ENCODE measurements at regions of chr17 and their contacts with region 1.

Region 1: DNA sequence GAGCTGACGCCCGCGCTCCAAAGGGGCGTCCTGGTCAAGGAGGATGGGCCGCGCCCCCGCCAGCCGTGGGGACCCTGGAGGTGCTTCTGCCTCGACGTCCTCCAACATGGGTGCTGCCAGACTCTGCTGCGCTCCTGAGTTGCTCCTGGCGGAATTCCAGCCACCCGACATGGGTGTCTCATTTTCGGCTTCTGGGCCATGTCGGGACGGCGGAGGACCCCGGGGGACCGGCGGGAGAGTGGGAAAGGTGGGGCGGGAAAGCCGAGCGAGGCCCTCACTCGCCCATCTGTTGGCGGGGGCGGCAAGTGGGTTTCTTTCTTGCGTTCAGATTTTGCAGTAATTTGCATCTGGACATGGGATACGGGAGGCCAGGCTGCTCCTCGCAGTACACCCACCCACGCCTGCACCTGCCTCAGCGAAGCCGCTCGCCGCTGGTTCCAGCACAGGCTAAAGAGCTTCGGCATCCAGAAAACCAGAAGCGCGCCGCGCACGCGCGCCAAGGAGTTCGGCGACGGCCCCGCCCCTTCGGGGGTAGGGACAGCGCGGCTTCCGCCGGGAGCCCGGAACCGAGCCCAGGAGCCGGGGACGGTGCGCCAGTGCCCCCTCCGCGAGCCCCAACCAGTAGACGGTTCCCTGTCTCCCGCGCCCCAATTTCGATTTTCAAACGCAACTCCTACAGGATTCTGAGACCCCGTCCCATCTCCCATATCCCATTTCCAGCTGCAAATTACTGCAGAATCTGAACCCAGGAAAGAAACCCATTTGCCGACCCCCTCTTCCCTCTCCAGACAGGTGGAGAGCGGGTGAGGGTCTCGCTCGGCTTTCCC is at the start of gene ARMC7:
- DNase-seq: peak; percentile 77 to 95 (median 91)
- ATAC-seq: peak; percentile 83
- H3K4me3 ChIP-seq: peak within 1 kb of the TSS; percentile 90 to 91
- H3K4me3 Mint-ChIP-seq: peak within 1 kb of the TSS; percentile 87
- H3K27ac ChIP-seq: peak within 1 kb of the TSS; percentile 42 to 75
- H3K27ac Mint-ChIP-seq: peak within 1 kb of the TSS; percentile 92
- H3K4me1 ChIP-seq: peaks cover 34% of the 10 kb centered on the region
- H3K4me1 Mint-ChIP-seq: peaks cover 33% of the 10 kb centered on the region
- H3K27me3 ChIP-seq: no peaks in the 10 kb centered on the region
- H3K27me3 Mint-ChIP-seq: no peaks in the 10 kb centered on the region
- CTCF ChIP-seq: no peak
- total RNA-seq, gene ARMC7: 2.0 to 3.0 TPM

Region 2: DNA sequence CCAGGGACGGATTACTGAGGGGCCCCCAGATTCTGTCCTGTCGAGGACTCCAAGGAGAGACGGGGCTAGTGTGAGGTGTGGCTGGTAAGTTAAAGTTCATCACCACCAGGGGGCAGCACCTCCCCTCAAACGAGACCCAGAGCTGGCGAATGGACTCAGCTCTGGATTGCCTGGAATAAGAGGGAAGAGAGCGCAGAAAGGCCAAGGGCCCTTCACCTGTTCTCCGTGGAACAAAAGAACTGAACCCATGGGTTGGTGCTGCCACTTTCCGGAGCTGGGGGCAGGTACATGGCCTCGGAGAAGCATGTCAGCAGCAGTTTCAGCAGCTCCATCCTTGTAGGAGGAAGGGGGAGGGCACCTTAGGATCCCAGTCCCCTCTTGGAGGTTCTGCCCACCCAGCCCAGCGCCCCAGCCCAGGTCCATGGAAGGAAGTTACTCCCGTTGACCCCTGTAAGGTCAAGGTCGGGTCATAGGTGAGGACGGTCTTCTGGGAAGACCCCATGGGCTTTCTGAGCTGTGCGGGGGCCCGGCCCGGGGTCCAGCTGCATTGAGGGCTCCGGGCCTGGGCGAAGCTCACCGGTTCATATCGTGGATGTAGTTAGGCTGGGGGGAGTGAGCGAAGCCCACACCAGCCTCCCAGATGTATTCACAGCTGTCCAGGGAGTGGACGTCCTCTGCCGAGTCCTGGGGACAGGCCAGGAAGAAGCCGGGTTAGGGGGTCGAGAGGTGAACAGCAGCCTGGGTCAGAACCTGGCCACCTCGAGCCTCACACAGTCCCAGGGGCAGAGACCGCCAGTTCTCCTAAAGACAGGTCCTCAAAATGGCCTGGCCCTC is 147.7 kb before region 1 on chr17:
- CTCF ChIA-PET with region 1: interaction called, 36 read pairs
- POLR2A ChIA-PET with region 1: interaction called, 8 read pairs
- intact Hi-C with region 1: loop called (anchors 1 to 5 kb)
- DNase-seq: peak; percentile 62 to 93 (median 85)
- ATAC-seq: peak; percentile 75
- H3K4me3 ChIP-seq: no peak overlapping the region
- H3K4me3 Mint-ChIP-seq: no peak overlapping the region
- H3K27ac ChIP-seq: no peak overlapping the region
- H3K27ac Mint-ChIP-seq: no peak overlapping the region
- H3K4me1 ChIP-seq: no peaks in the 10 kb centered on the region
- H3K4me1 Mint-ChIP-seq: peaks cover 9% of the 10 kb centered on the region
- H3K27me3 ChIP-seq: no peaks in the 10 kb centered on the region
- H3K27me3 Mint-ChIP-seq: no peaks in the 10 kb centered on the region
- CTCF ChIP-seq: peak; percentile 86

Region 3: GRCh38 chr17:75069783-75070182 is 39.8 kb before region 1 on chr17:
- CTCF ChIA-PET with region 1: interaction called, 16 read pairs
- POLR2A ChIA-PET with region 1: no interaction called
- intact Hi-C with region 1: no loop called
- DNase-seq: peak in 1 of 9 experiments; percentile 34
- ATAC-seq: no peak
- H3K4me3 ChIP-seq: no peak overlapping the region
- H3K4me3 Mint-ChIP-seq: no peak overlapping the region
- H3K27ac ChIP-seq: no peak overlapping the region
- H3K27ac Mint-ChIP-seq: no peak overlapping the region
- H3K4me1 ChIP-seq: peaks cover 9% of the 10 kb centered on the region
- H3K4me1 Mint-ChIP-seq: peaks cover 16% of the 10 kb centered on the region
- H3K27me3 ChIP-seq: no peaks in the 10 kb centered on the region
- H3K27me3 Mint-ChIP-seq: no peaks in the 10 kb centered on the region
- CTCF ChIP-seq: no peak

Region 4: DNA sequence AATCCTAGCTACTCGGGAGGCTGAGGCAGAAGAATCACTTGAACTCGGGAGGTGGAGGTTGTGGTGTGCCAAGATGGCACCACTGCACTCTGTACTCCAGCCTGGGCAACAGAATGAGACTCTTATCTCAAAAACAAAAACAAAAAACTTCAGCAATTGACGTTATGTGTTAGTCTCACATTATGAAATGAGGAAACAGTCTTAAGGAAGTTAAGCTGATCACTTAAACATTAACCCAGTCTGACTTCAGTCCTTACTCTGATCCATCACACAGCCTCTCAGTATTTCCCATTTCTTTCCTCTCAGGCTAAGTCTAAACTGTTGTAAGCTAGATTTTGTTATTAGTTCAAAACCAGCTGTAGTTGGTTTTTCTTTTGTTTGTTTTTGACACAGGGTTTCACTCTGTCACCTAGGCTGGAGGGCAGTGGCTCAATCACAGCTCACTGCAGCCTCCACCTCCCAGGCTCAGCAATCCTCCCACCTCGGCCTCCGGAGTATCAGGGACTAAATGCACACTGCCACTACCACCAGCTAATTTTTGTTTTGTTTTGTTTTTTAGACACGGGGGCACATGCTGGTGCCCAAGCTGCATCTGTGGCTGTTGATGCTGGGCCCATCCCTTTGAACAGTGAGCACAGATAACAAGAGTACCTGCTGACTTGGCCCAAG is 38.4 kb after region 1 on chr17:
- CTCF ChIA-PET with region 1: interaction called, 16 read pairs
- POLR2A ChIA-PET with region 1: no interaction called
- intact Hi-C with region 1: no loop called
- DNase-seq: no peak
- ATAC-seq: no peak
- H3K4me3 ChIP-seq: no peak overlapping the region
- H3K4me3 Mint-ChIP-seq: no peak overlapping the region
- H3K27ac ChIP-seq: no peak overlapping the region
- H3K27ac Mint-ChIP-seq: peak overlapping the region; percentile 25
- H3K4me1 ChIP-seq: peaks cover 13% of the 10 kb centered on the region
- H3K4me1 Mint-ChIP-seq: peaks cover 15% of the 10 kb centered on the region
- H3K27me3 ChIP-seq: no peaks in the 10 kb centered on the region
- H3K27me3 Mint-ChIP-seq: no peaks in the 10 kb centered on the region
- CTCF ChIP-seq: no peak

Region 5: GRCh38 chr17:75205037-75205792 is 95.6 kb after region 1 on chr17 and contains the start of gene NUP85:
- CTCF ChIA-PET with region 1: interaction called, 177 read pairs
- POLR2A ChIA-PET with region 1: interaction called, 20 read pairs
- intact Hi-C with region 1: loop called (anchors 1 kb)
- DNase-seq: peak; percentile 84 to 96 (median 92)
- ATAC-seq: peak; percentile 93
- H3K4me3 ChIP-seq: peak within 1 kb of the TSS; percentile 85 to 93
- H3K4me3 Mint-ChIP-seq: peak within 1 kb of the TSS; percentile 94
- H3K27ac ChIP-seq: peak within 1 kb of the TSS; percentile 70 to 89
- H3K27ac Mint-ChIP-seq: peak within 1 kb of the TSS; percentile 99
- H3K4me1 ChIP-seq: peaks cover 19% of the 10 kb centered on the region
- H3K4me1 Mint-ChIP-seq: peaks cover 23% of the 10 kb centered on the region
- H3K27me3 ChIP-seq: no peaks in the 10 kb centered on the region
- H3K27me3 Mint-ChIP-seq: no peaks in the 10 kb centered on the region
- CTCF ChIP-seq: no peak
- total RNA-seq, gene NUP85: 57.4 to 65.3 TPM

Region 6: GRCh38 chr17:75271233-75271954 is 161.8 kb after region 1 on chr17:
- CTCF ChIA-PET with region 1: interaction called, 4 read pairs
- POLR2A ChIA-PET with region 1: interaction called, 9 read pairs
- intact Hi-C with region 1: loop called in 1 of 2 experiments (anchors 1 kb)
- DNase-seq: peak; percentile 75 to 94 (median 88)
- ATAC-seq: peak; percentile 92
- H3K4me3 ChIP-seq: peak overlapping the region; percentile 84 to 93
- H3K4me3 Mint-ChIP-seq: peak overlapping the region; percentile 81
- H3K27ac ChIP-seq: peak overlapping the region; percentile 82 to 91
- H3K27ac Mint-ChIP-seq: peak overlapping the region; percentile 84
- H3K4me1 ChIP-seq: peaks cover 18% of the 10 kb centered on the region
- H3K4me1 Mint-ChIP-seq: peaks cover 25% of the 10 kb centered on the region
- H3K27me3 ChIP-seq: no peaks in the 10 kb centered on the region
- H3K27me3 Mint-ChIP-seq: no peaks in the 10 kb centered on the region
- CTCF ChIP-seq: peak; percentile 65

Region 7: DNA sequence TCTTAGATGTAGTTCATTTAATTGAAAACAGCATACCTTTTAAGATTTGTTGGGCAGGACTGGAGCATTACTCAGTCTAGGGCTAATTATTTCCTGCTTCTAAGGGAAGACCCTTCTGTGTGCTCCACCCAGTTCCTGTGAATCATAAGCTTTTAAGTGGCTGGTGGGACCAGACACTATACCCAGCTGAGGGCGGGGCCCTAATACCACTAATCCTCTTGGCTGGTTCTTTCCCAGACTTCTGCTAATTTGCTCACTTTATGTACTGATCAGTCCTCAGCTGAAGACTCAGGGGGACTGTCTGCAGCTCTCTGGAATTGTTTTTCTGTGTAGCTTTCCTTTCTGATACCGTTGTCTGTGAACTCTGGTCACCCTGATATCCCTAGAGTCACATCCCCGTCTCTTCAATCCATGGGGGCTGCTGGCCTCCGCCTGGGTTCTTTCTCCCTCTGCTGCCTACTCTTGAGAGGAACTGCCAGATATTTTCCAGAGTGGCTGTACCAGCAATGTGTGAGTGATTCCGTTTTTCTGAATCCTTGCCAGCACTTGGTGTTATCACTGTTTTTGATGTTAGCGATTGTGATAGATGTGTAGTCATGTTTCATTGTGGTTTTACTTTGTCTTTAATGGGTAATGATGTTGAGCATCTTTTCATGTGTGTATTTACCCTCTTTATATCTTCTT is 1663.4 kb after region 1 on chr17:
- CTCF ChIA-PET with region 1: no interaction called
- POLR2A ChIA-PET with region 1: no interaction called
- intact Hi-C with region 1: no loop called
- DNase-seq: peak in 8 of 9 experiments; percentile 32 to 89 (median 62)
- ATAC-seq: peak; percentile 88
- H3K4me3 ChIP-seq: peak overlapping the region; percentile 30 to 39
- H3K4me3 Mint-ChIP-seq: peak overlapping the region; percentile 70
- H3K27ac ChIP-seq: peak overlapping the region; percentile 60 to 87
- H3K27ac Mint-ChIP-seq: peak overlapping the region; percentile 97
- H3K4me1 ChIP-seq: peaks cover 11% of the 10 kb centered on the region
- H3K4me1 Mint-ChIP-seq: peaks cover 20% of the 10 kb centered on the region
- H3K27me3 ChIP-seq: no peaks in the 10 kb centered on the region
- H3K27me3 Mint-ChIP-seq: no peaks in the 10 kb centered on the region
- CTCF ChIP-seq: no peak

Measured in CD8-positive, alpha-beta T cell (primary cell).